HepG2 (cell line): ENCODE measurements at regions of chr14 and their contacts with region 1.

Region 1: GRCh38 chr14:66495218-66496098 is 9.3 kb downstream of the CCDC196 start:
- DNase-seq: peak; percentile 65
- ATAC-seq: peak; percentile 98
- H3K4me3 ChIP-seq: peak overlapping the region; percentile 29 to 45 (median 36); a peak in 5 of 6 replicates
- H3K27ac ChIP-seq: no peak overlapping the region
- H3K4me1 ChIP-seq: peaks cover 17% of the 10 kb centered on the region
- H3K27me3 ChIP-seq: no peaks in the 10 kb centered on the region
- CTCF ChIP-seq: peak; percentile 80
- EP300 ChIP-seq: no peak
- POLR2A ChIP-seq: no peak
- RAD21 ChIP-seq: peak; percentile 49; the same call in 1 of the 2 replicates

Region 2: GRCh38 chr14:66507722-66508546 is 12.5 kb after region 1 on chr14 and contains the start of gene GPHN:
- CTCF ChIA-PET with region 1: interaction called, 5 read pairs
- POLR2A ChIA-PET with region 1: interaction called, 18 read pairs
- in situ Hi-C with region 1: no loop called
- intact Hi-C with region 1: no loop called
- DNase-seq: peak; percentile 95
- ATAC-seq: peak; percentile 96
- H3K4me3 ChIP-seq: peak within 1 kb of the TSS; percentile 95 to 100 (median 99)
- H3K27ac ChIP-seq: peak within 1 kb of the TSS; percentile 94
- H3K4me1 ChIP-seq: peaks cover 35% of the 10 kb centered on the region
- H3K27me3 ChIP-seq: no peaks in the 10 kb centered on the region; a peak in 1 of 5 replicates
- CTCF ChIP-seq: peak; percentile 52
- EP300 ChIP-seq: no peak; a peak in 1 of 4 replicates
- POLR2A ChIP-seq: peak; percentile 94 to 96
- RAD21 ChIP-seq: 0 out of 2 replicates have a peak, but pooled peaks have one; percentile 30
- total RNA-seq, gene GPHN: 19.2 and 37.7 TPM in 2 replicates

Region 3: GRCh38 chr14:66624299-66624937 is 129.0 kb after region 1 on chr14:
- CTCF ChIA-PET with region 1: no interaction called
- POLR2A ChIA-PET with region 1: no interaction called
- in situ Hi-C with region 1: no loop called
- intact Hi-C with region 1: no loop called
- DNase-seq: peak; percentile 53
- ATAC-seq: peak; percentile 98
- H3K4me3 ChIP-seq: no peak overlapping the region
- H3K27ac ChIP-seq: no peak overlapping the region
- H3K4me1 ChIP-seq: peaks cover 18% of the 10 kb centered on the region
- H3K27me3 ChIP-seq: no peaks in the 10 kb centered on the region
- CTCF ChIP-seq: peak; percentile 77
- EP300 ChIP-seq: no peak
- POLR2A ChIP-seq: no peak
- RAD21 ChIP-seq: peak; percentile 52; the same call in 1 of the 2 replicates

Region 4: DNA sequence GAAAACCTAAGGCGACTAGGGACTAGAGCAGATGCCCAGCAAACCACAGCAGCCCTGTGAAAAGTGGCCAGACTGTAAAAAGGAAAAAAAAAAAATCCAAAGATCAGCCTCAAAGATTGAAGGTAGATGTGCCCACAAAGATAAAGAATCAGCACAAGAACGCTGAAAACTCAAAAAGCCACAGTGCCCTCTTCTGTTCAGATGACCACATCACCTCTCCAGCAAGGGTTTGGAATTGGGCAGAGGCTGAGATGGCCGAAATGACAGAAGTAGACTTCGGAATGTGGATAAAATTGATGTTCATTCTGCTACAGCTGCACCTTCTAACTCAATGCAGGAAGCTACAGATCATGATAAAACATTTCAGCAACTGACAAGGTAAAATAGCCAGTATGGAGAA is 166.9 kb after region 1 on chr14:
- CTCF ChIA-PET with region 1: interaction called, 9 read pairs
- POLR2A ChIA-PET with region 1: no interaction called
- in situ Hi-C with region 1: no loop called
- intact Hi-C with region 1: loop called (anchors 2 kb)
- DNase-seq: peak; percentile 10
- ATAC-seq: peak; percentile 61; the same call in 2 of the 3 replicates
- H3K4me3 ChIP-seq: no peak overlapping the region
- H3K27ac ChIP-seq: no peak overlapping the region
- H3K4me1 ChIP-seq: no peaks in the 10 kb centered on the region
- H3K27me3 ChIP-seq: no peaks in the 10 kb centered on the region
- CTCF ChIP-seq: peak; percentile 57
- EP300 ChIP-seq: no peak
- POLR2A ChIP-seq: no peak
- RAD21 ChIP-seq: no peak

Region 5: GRCh38 chr14:67137744-67138371 is 642.4 kb after region 1 on chr14:
- CTCF ChIA-PET with region 1: interaction called, 4 read pairs
- POLR2A ChIA-PET with region 1: no interaction called
- in situ Hi-C with region 1: no loop called
- intact Hi-C with region 1: loop called (anchors 5 kb)
- DNase-seq: no peak
- ATAC-seq: no peak
- H3K4me3 ChIP-seq: no peak overlapping the region
- H3K27ac ChIP-seq: no peak overlapping the region
- H3K4me1 ChIP-seq: no peaks in the 10 kb centered on the region
- H3K27me3 ChIP-seq: no peaks in the 10 kb centered on the region
- CTCF ChIP-seq: peak; percentile 36
- EP300 ChIP-seq: no peak
- POLR2A ChIP-seq: no peak
- RAD21 ChIP-seq: no peak